Ascending aorta (tissue), 2 donors: ENCODE measurements at regions of chr5 and their contacts with region 1.

Region 1: DNA sequence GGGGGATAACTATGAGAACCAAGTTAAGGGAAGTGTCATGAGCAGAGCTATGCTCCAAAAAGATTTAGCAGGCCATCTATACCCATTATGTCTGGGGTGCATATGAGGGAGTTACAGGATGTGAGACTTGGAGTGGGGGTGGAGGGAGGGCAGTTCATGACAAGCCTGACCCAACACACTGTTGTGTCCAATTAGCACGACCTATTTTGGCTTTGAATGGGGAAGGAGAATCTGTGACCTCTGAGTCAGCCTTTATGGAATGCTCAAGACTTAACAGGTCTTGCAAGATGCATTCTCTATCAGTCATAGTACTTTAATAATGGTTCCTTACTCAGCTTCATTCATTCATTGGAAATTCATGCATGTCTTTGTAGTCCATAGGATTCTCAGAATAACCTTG is 71.7 kb downstream of the GRIA1 start:
- DNase-seq: no peak
- H3K4me3 ChIP-seq: no peak overlapping the region
- H3K27ac ChIP-seq: no peak overlapping the region
- H3K4me1 ChIP-seq: peaks cover 0 to 7% of the 10 kb centered on the region in 2 donors
- H3K27me3 ChIP-seq: no peaks in the 10 kb centered on the region
- CTCF ChIP-seq: no peak

Region 2: GRCh38 chr5:152634586-152634985 is 927.6 kb before region 1 on chr5:
- intact Hi-C with region 1: loop called (anchors 5 kb)
- DNase-seq: peak in 1 of 2 donors; percentile 66
- H3K4me3 ChIP-seq: no peak overlapping the region
- H3K27ac ChIP-seq: peak overlapping the region; percentile 85 to 90
- H3K4me1 ChIP-seq: peaks cover 0 to 61% of the 10 kb centered on the region in 2 donors
- H3K27me3 ChIP-seq: no peaks in the 10 kb centered on the region
- CTCF ChIP-seq: no peak

Region 3: DNA sequence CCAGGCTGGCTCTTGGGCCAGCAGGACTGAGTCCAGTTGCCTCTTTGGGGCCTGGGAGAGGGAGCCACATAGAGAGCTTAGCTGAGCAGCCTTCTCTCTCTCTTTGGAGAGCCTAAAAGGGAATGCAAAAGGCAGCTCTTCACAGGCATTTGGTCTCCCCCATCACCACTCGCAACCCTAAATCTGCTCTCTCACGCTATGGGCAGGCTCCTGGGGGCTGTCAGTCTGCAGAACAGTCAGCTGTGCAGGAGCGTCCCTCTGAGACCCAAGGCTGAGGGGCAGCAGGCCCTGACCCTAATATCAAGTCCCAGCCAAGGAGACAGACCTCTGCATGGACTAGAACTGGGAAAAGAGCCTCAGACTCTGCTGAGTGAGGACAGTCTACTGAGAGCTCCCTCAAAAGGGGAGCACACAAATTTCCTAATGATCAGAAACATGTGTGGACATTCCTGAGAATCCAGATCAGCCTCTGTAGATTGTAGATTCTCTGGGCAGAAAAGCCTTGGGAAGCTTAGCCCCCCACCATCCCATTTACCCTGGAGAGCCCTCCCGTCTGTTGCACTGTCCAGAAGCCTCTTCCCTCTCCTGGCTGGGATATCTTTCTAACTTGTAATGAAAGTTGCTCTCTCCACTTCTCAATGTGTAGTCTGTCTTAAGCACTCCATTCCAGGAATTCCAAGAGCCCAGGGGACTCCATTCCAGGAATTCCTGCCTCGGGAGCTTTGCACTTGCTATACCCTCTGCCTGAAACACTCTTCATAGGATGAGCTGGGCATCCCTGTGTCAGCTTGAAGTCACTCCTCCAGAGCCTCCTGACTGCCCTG is 397.2 kb after region 1 on chr5:
- intact Hi-C with region 1: loop called (anchors 10 kb)
- DNase-seq: no peak
- H3K4me3 ChIP-seq: no peak overlapping the region
- H3K27ac ChIP-seq: peak overlapping the region in 1 of 2 donors; percentile 47
- H3K4me1 ChIP-seq: peaks cover 11 to 23% of the 10 kb centered on the region in 2 donors
- H3K27me3 ChIP-seq: no peaks in the 10 kb centered on the region
- CTCF ChIP-seq: no peak